Heart left ventricle (tissue), 16 donors: ENCODE measurements at regions of chr5 and their contacts with region 1.

Region 1: GRCh38 chr5:97078958-97079743 is 63.3 kb downstream of the LIX1 start:
- DNase-seq: no peak
- ATAC-seq: no peak
- H3K4me3 ChIP-seq: no peak overlapping the region
- H3K27ac ChIP-seq: no peak overlapping the region
- H3K4me1 ChIP-seq: peaks cover 0 to 9% (median 0%) of the 10 kb centered on the region in 12 donors
- H3K27me3 ChIP-seq: no peaks in the 10 kb centered on the region
- CTCF ChIP-seq: no peak
- POLR2A ChIP-seq: no peak

Region 2: DNA sequence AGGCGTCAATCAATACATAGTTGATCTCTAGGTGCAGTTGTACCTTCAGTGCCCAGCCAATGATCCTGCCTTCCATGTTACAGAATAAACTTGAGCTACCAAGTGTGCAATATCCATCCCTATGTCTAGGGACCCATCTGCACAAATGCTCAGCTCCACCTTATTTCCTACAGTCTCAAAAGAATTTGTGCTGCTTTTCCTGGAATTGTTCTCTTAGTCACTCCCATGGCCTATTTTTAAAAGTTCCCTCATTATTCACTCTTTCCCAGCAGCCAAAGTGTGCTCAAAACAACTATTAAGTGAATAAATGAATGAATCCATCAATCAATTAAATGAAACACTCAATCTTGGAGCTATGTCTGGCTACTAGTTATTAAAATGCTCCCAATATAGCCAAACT is 48.6 kb after region 1 on chr5:
- intact Hi-C with region 1: loop called in 1 of 10 experiments (anchors 5 kb)
- DNase-seq: no peak
- ATAC-seq: peak in 3 of 4 donors; percentile 51 to 75 (median 58)
- H3K4me3 ChIP-seq: no peak overlapping the region
- H3K27ac ChIP-seq: peak overlapping the region in 8 of 12 donors; percentile 8 to 66 (median 34)
- H3K4me1 ChIP-seq: peaks cover 0 to 13% (median 1%) of the 10 kb centered on the region in 12 donors
- H3K27me3 ChIP-seq: no peaks in the 10 kb centered on the region
- CTCF ChIP-seq: no peak
- POLR2A ChIP-seq: no peak

Region 3: DNA sequence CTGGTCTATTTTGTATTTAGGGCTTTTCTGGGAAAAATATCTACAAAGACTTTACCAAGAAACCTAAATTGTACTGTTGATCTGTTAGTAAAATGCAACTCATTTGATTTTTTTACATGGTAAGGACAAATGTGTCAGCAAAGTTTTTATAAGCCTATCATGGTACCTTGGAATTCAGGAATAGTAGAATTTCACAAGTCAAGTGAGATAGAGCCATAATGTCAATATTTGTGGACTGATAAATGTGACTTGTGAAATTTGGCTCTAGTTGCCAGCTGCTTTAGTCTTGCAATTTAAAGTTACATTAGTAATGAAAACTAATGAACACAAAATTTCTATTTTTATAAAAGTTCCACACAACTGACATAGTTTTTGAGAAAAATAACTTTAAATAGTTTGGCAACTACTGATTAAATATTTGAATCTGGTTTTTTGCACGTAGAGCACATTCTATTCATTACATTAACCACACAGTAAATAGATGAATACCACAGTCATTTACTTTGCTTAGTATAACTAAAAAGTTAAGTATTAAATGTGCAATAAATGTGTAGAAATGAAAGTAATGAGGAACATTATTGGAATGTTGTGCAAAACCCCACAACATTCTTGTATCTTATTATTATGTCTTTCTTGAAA is 145.1 kb after region 1 on chr5:
- intact Hi-C with region 1: no loop called
- DNase-seq: no peak
- ATAC-seq: no peak
- H3K4me3 ChIP-seq: no peak overlapping the region
- H3K27ac ChIP-seq: no peak overlapping the region
- H3K4me1 ChIP-seq: peaks cover 0 to under 1% (median 0%) of the 10 kb centered on the region in 12 donors
- H3K27me3 ChIP-seq: no peaks in the 10 kb centered on the region
- CTCF ChIP-seq: no peak
- POLR2A ChIP-seq: no peak